ENCODE measurements at regions of chr1 and their contacts with region 1.

Region 1: DNA sequence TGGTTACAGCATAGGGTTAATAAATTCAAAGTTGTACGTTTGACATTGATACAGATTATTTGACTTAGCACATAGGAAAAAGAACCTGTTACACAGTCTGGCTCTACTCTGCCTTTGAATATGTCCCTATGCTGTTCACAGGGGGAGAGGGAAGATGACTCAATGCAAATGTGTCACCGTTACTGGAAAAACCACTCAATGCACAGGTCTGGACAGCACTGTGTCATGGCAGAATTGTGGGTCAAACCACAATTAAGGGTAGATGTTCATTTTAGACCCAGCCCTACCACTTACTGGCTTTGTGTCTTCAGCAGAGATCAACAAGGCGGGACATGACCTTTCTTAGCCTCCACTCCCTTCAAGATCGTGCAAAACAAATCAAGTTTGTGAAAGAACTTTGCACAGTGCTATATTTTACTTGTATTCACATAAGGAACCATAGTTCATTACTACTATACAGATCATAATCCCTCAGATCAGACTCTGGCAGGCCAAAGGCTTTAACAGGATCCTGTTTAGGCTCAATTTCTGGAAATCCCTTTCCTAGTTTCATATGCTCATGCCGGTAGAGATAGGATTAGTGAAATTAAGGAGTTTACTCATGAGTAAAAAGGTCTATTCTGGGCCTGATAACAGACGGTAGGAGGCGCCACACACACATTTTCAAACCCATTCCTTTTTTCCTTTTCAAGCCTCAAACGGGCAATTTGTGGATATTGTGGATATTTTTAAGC is 22.1 kb downstream of the EIF2D start:
- DNase-seq: peak; percentile 62
- H3K4me3 Mint-ChIP-seq: peak overlapping the region; percentile 62
- H3K27ac Mint-ChIP-seq: peak overlapping the region; percentile 97
- H3K4me1 Mint-ChIP-seq: peaks cover 65% of the 10 kb centered on the region
- H3K27me3 Mint-ChIP-seq: no peaks in the 10 kb centered on the region

Region 2: GRCh38 chr1:206507284-206508129 is 82.7 kb before region 1 on chr1 and contains the start of gene RASSF5:
- intact Hi-C with region 1: loop called (anchors 1 kb)
- DNase-seq: peak; percentile 74
- H3K4me3 Mint-ChIP-seq: peak within 1 kb of the TSS; percentile 75
- H3K27ac Mint-ChIP-seq: no peak within 1 kb of the TSS
- H3K4me1 Mint-ChIP-seq: peaks cover 30% of the 10 kb centered on the region
- H3K27me3 Mint-ChIP-seq: peaks cover 18% of the 10 kb centered on the region
- total RNA-seq, gene RASSF5: 180 and 182 TPM in 2 replicates

Region 3: DNA sequence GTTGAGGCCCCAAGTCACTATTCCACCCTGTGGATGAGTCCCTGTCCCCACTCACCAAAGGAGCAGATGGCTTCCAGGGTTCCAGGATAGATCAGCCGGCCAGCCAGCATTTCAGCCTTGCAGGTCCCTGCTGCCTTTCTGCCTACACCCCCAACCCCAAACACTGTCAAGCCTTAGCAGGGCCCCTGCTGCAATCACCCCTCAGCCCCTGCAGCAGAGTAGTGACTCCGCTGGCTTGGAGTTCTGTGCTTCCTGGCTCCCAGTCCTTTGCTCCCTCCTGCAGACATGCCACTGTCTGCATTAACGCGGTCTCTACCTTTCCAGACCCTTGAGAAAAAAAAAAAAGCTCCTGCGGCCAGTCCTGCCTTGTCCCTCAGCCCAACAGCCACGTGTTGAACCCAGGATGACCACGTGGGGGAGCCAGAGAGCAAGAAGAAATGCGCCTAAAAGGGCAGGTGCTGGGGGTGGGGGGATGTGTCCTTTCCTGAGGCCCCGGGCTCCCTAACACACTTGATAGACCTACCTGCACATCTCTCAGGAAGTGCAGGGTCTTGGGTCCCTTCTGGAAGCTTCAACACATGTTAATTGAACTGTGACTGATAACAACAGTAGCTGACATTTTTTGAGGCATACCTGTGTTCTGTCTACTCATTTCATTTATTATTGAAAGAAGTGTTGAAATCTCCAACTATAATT is 45.5 kb before region 1 on chr1:
- intact Hi-C with region 1: loop called (anchors 2 kb)
- DNase-seq: peak; percentile 73
- H3K4me3 Mint-ChIP-seq: no peak overlapping the region
- H3K27ac Mint-ChIP-seq: no peak overlapping the region
- H3K4me1 Mint-ChIP-seq: peaks cover 18% of the 10 kb centered on the region
- H3K27me3 Mint-ChIP-seq: no peaks in the 10 kb centered on the region

Region 4: DNA sequence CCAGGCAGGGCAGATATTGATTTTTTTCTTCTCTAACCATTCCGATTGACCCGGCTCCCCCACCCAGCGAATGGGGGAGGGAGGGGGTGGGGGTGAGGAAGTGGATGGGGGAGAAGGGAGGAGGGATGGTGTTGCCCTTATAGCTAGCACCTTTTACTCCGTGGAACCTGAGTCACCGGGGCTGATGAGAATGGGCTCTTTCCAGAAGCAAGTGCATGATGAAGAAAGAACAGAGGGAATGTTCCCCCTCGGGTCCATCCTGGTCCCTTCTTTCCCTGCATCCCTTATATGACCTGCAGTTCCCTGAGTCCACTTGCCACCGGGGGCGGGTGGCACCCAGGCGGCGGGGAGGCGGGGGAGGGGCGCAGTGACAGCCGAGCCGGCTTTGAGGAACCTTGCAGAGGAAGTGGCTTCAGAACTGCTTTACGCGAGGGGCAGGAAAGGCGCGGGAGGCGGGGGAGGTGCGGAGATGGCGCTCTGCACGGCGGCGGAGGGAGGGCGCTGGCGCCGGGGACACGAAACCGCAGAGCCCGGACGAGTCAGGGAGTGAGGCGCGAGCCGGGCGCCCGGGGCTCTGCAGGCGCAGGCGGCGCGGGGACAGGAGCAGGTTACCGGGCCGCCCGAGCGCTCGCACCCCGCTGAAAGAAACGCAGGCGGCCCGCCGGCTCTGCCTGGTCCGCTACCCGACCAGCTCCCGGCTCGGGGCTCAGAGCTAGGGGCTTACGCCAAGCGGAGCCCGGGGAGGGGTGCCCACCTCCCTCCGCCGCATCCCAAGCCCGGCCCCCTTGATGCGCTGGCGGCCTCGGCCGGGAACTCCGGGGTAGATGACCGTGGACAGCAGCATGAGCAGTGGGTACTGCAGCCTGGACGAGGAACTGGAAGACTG is 33.2 kb before region 1 on chr1:
- intact Hi-C with region 1: loop called (anchors 1 kb)
- DNase-seq: peak; percentile 89
- H3K4me3 Mint-ChIP-seq: peak overlapping the region; percentile 97
- H3K27ac Mint-ChIP-seq: peak overlapping the region; percentile 95
- H3K4me1 Mint-ChIP-seq: peaks cover 65% of the 10 kb centered on the region
- H3K27me3 Mint-ChIP-seq: no peaks in the 10 kb centered on the region

Region 5: DNA sequence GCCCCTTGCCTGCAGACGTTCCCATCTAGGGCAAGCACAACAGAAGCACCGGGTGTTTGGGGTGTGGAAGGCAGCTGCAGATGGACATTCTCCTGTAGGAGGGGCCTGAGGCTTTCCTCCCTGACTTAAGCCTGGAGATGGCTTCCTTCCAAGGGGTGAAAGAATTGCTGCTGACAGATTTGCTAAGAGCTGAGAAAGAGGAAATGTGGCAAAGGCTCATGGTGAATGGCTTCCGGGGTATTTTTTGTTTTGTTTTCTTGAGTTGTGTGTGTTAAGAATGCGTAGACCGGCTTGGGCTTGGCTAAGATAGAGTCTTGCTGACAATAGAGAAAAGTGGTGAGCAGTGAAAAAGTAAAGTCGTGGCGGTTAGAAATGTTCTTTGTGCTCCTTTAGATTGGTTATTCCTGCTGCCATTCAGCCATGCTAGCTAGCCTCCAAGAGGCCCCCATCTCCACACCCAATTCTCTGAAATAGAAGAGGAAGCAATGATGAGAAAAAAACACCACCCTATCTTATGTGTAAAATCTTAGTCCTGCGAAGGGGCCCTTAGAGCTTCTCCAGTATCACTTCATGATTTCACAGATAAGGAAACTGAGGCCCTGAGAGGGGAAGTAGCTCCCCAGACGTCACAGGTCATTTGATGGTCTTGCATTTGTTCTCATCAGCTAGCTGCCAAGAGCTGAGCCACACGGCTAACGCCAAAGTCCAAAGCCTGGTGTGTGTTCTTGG is 14.9 kb before region 1 on chr1:
- intact Hi-C with region 1: loop called (anchors 1 kb)
- DNase-seq: peak; percentile 65
- H3K4me3 Mint-ChIP-seq: peak overlapping the region; percentile 70
- H3K27ac Mint-ChIP-seq: peak overlapping the region; percentile 98
- H3K4me1 Mint-ChIP-seq: peaks cover 86% of the 10 kb centered on the region
- H3K27me3 Mint-ChIP-seq: no peaks in the 10 kb centered on the region

Region 6: GRCh38 chr1:206612129-206612876 is 22.1 kb after region 1 on chr1 and contains the start of gene EIF2D:
- intact Hi-C with region 1: loop called (anchors 1 kb)
- DNase-seq: peak; percentile 91
- H3K4me3 Mint-ChIP-seq: peak within 1 kb of the TSS; percentile 92
- H3K27ac Mint-ChIP-seq: peak within 1 kb of the TSS; percentile 84
- H3K4me1 Mint-ChIP-seq: peaks cover 30% of the 10 kb centered on the region
- H3K27me3 Mint-ChIP-seq: peaks cover 7% of the 10 kb centered on the region
- total RNA-seq, gene EIF2D: 72.7 and 73.3 TPM in 2 replicates